Naive thymus-derived CD4-positive, alpha-beta T cell (primary cell): ENCODE measurements at regions of chr6 and their contacts with region 1.

Region 1: GRCh38 chr6:188821-189655 is 103.2 kb upstream of the DUSP22 start:
- DNase-seq: peak; percentile 36 to 80 (median 61)
- ATAC-seq: peak; percentile 91
- H3K4me3 ChIP-seq: no peak overlapping the region
- H3K4me3 Mint-ChIP-seq: peak overlapping the region in 1 of 10 donors; percentile 52
- H3K27ac ChIP-seq: no peak overlapping the region
- H3K27ac Mint-ChIP-seq: peak overlapping the region in 2 of 9 donors; percentile 47 to 51
- H3K4me1 ChIP-seq: peaks cover 12 to 25% of the 10 kb centered on the region in 2 donors
- H3K4me1 Mint-ChIP-seq: peaks cover 16 to 38% (median 34%) of the 10 kb centered on the region in 7 donors
- H3K27me3 ChIP-seq: no peaks in the 10 kb centered on the region
- H3K27me3 Mint-ChIP-seq: no peaks in the 10 kb centered on the region

Region 2: GRCh38 chr6:206264-206663 is 17.2 kb after region 1 on chr6:
- CTCF ChIA-PET with region 1: no interaction called
- POLR2A ChIA-PET with region 1: no interaction called
- intact Hi-C with region 1: no loop called
- DNase-seq: no peak
- ATAC-seq: no peak
- H3K4me3 ChIP-seq: no peak overlapping the region
- H3K4me3 Mint-ChIP-seq: no peak overlapping the region
- H3K27ac ChIP-seq: no peak overlapping the region
- H3K27ac Mint-ChIP-seq: peak overlapping the region in 2 of 9 donors; percentile 12
- H3K4me1 ChIP-seq: peaks cover 0 to 9% of the 10 kb centered on the region in 2 donors
- H3K4me1 Mint-ChIP-seq: peaks cover 0 to 32% (median 4%) of the 10 kb centered on the region in 7 donors
- H3K27me3 ChIP-seq: no peaks in the 10 kb centered on the region
- H3K27me3 Mint-ChIP-seq: peaks cover 0 to 21% (median 0%) of the 10 kb centered on the region in 5 donors

Region 3: GRCh38 chr6:291697-292505 is 102.9 kb after region 1 on chr6 and contains the start of gene DUSP22:
- CTCF ChIA-PET with region 1: no interaction called
- POLR2A ChIA-PET with region 1: interaction called, 4 read pairs
- intact Hi-C with region 1: loop called (anchors 1 kb)
- DNase-seq: peak; percentile 52 to 95 (median 78)
- ATAC-seq: peak; percentile 74
- H3K4me3 ChIP-seq: peak within 1 kb of the TSS; percentile 63
- H3K4me3 Mint-ChIP-seq: peak within 1 kb of the TSS; percentile 85 to 97 (median 93)
- H3K27ac ChIP-seq: peak within 1 kb of the TSS; percentile 82
- H3K27ac Mint-ChIP-seq: peak within 1 kb of the TSS; percentile 86 to 98 (median 94)
- H3K4me1 ChIP-seq: peaks cover 9 to 26% of the 10 kb centered on the region in 2 donors
- H3K4me1 Mint-ChIP-seq: peaks cover 31 to 63% (median 47%) of the 10 kb centered on the region in 7 donors
- H3K27me3 ChIP-seq: no peaks in the 10 kb centered on the region
- H3K27me3 Mint-ChIP-seq: no peaks in the 10 kb centered on the region
- total RNA-seq, gene DUSP22: 24.8 to 57.2 (median 51.0) TPM

Region 4: GRCh38 chr6:379367-380181 is 190.5 kb after region 1 on chr6:
- CTCF ChIA-PET with region 1: no interaction called
- POLR2A ChIA-PET with region 1: no interaction called
- intact Hi-C with region 1: no loop called
- DNase-seq: no peak
- ATAC-seq: peak; percentile 25
- H3K4me3 ChIP-seq: no peak overlapping the region
- H3K4me3 Mint-ChIP-seq: peak overlapping the region in 1 of 10 donors; percentile 3
- H3K27ac ChIP-seq: no peak overlapping the region
- H3K27ac Mint-ChIP-seq: no peak overlapping the region
- H3K4me1 ChIP-seq: no peaks in the 10 kb centered on the region
- H3K4me1 Mint-ChIP-seq: peaks cover 5 to 20% (median 9%) of the 10 kb centered on the region in 7 donors
- H3K27me3 ChIP-seq: no peaks in the 10 kb centered on the region
- H3K27me3 Mint-ChIP-seq: peaks cover 11 to 57% (median 29%) of the 10 kb centered on the region in 5 donors

Region 5: GRCh38 chr6:391559-392440 is 202.8 kb after region 1 on chr6 and contains the start of gene IRF4:
- CTCF ChIA-PET with region 1: interaction called, 3 read pairs
- POLR2A ChIA-PET with region 1: no interaction called
- intact Hi-C with region 1: loop called (anchors 1 kb)
- DNase-seq: peak in 6 of 9 donors; percentile 20 to 87 (median 32)
- ATAC-seq: peak; percentile 66
- H3K4me3 ChIP-seq: peak within 1 kb of the TSS; percentile 72
- H3K4me3 Mint-ChIP-seq: peak within 1 kb of the TSS; percentile 88 to 100 (median 96)
- H3K27ac ChIP-seq: peak within 1 kb of the TSS; percentile 60
- H3K27ac Mint-ChIP-seq: peak within 1 kb of the TSS in 8 of 9 donors; percentile 21 to 98 (median 69)
- H3K4me1 ChIP-seq: peaks cover 13 to 16% of the 10 kb centered on the region in 2 donors
- H3K4me1 Mint-ChIP-seq: peaks cover 20 to 56% (median 31%) of the 10 kb centered on the region in 7 donors
- H3K27me3 ChIP-seq: no peaks in the 10 kb centered on the region
- H3K27me3 Mint-ChIP-seq: peaks cover 0 to 24% (median 3%) of the 10 kb centered on the region in 5 donors
- total RNA-seq, gene IRF4: 11.8 to 175 (median 27.1) TPM

Region 6: DNA sequence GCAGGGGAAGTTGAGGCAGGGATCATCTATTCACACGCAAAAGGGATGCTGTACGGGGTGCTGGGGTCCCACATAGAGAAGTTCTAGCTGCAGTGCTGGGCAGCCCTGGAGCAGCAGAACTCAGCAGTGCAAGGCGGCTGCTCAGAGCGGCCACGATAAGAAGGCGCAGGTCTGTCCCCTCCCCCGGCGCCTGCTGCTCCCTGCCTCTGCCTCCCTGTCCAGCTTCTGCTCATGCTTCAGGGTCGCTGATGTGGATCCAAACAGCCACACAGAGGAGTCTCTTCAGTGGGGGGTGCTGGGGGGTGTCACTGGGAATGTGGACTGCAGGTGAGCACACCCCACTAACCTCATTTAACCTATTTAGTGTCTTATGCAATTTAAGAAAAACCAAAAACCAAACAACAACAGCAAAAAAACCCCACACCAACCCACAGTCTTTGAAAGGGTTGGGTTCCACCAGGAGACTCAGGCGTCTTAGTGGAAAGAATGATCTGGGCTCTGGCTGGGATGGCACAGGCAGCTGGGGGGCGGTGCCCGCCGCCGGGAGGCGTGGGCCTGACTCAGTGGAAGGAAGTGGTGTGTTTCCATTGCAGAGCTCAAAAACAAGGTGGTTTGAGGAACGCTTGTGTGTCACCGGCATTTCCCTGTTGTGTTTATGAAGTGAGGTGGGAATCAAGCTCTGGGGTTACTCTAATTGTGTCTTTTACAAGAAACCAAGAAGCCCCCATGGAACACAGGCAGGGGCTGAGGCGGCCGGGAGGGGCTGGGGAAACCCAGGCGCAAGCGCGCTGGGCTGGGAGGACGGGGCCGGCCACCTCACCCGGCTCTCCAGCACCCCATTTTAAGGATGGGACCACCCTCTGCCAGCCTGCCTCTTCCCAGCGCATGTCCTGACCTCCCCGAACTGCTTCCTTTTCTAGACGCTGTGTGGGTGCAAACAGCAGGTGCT is 257.7 kb after region 1 on chr6:
- CTCF ChIA-PET with region 1: no interaction called
- POLR2A ChIA-PET with region 1: no interaction called
- intact Hi-C with region 1: loop called (anchors 2 to 5 kb)
- DNase-seq: peak in 8 of 9 donors; percentile 51 to 95 (median 66)
- ATAC-seq: peak; percentile 73
- H3K4me3 ChIP-seq: peak overlapping the region; percentile 38
- H3K4me3 Mint-ChIP-seq: peak overlapping the region; percentile 34 to 76 (median 59)
- H3K27ac ChIP-seq: no peak overlapping the region
- H3K27ac Mint-ChIP-seq: peak overlapping the region; percentile 70 to 92 (median 80)
- H3K4me1 ChIP-seq: peaks cover 36 to 48% of the 10 kb centered on the region in 2 donors
- H3K4me1 Mint-ChIP-seq: peaks cover 40 to 57% (median 56%) of the 10 kb centered on the region in 7 donors
- H3K27me3 ChIP-seq: no peaks in the 10 kb centered on the region
- H3K27me3 Mint-ChIP-seq: peaks cover 0 to 2% (median 0%) of the 10 kb centered on the region in 5 donors

Region 7: DNA sequence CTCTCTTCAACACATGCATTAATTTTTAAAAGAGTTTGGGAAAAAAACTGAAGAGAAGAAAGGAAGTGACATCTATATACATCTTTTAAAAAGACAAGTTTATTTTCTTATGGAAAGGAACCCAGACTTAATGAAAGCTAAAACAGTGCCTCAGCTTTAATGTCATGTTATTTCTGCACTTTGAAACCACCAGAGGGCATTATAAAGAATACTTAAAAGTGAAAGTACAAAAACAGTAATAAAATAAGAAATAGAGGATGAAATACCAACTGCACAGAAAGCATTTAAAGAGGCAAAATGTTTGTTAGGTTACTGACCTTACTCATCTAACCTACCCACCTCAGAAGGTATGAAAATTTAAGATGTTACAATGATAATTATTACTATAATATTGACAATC is 369.1 kb after region 1 on chr6:
- CTCF ChIA-PET with region 1: interaction called, 3 read pairs
- POLR2A ChIA-PET with region 1: no interaction called
- intact Hi-C with region 1: loop called in 1 of 2 experiments (anchors 1 kb)
- DNase-seq: peak in 3 of 9 donors; percentile 2 to 7 (median 6)
- ATAC-seq: no peak
- H3K4me3 ChIP-seq: no peak overlapping the region
- H3K4me3 Mint-ChIP-seq: peak overlapping the region in 5 of 10 donors; percentile 25 to 42 (median 33)
- H3K27ac ChIP-seq: no peak overlapping the region
- H3K27ac Mint-ChIP-seq: peak overlapping the region in 5 of 9 donors; percentile 9 to 62 (median 19)
- H3K4me1 ChIP-seq: peaks cover 0 to 11% of the 10 kb centered on the region in 2 donors
- H3K4me1 Mint-ChIP-seq: peaks cover 13 to 31% (median 27%) of the 10 kb centered on the region in 7 donors
- H3K27me3 ChIP-seq: no peaks in the 10 kb centered on the region
- H3K27me3 Mint-ChIP-seq: no peaks in the 10 kb centered on the region

Region 8: DNA sequence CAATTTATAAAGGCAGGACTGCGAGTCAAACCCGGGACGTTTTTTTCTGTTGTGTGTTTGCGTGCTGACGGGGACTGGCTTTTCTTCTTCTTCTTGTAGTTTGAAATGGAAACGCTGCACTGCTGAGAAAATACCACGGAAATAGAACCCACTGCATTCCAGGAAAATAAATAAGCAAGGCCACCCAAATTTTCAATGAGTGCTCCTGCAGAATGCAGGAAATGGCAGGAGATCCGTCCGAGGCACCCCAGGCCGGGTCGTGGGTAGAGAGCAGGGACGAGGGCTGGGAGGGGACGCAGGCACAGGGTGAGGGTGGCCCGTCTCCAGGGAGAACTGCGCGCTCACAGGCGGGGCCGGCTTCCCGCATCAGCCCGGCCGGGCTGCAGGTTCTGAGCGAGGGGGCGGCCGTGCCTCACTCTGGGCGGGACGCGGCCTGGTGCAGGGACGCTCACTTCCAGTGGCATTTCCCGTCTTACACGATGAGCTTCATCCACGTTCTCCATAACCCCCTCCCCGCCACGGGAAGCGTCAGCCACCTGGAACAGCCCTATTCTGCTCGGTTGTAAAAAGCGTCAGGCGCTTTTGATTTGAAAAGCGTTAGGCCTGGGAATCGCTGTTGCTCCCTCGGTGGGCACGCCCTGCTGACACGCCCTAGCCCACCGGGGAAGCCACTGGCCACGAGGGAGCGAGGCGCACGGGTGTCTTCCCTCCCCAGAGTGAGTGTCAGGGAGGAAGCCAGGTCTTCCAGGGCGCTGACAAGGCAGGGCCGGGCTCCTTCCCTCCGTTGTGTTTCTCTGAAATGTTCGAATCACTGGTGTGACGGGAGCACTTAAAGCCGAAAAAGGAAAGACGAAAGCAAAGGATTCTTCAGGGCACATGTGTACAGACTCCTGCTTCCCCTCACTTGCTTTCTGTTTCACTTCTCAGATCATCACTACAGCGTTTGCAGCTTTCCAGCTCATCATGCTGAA is 521.8 kb after region 1 on chr6:
- CTCF ChIA-PET with region 1: no interaction called
- POLR2A ChIA-PET with region 1: no interaction called
- intact Hi-C with region 1: loop called in 1 of 2 experiments (anchors 2 kb)
- DNase-seq: peak; percentile 26 to 72 (median 63)
- ATAC-seq: peak; percentile 90
- H3K4me3 ChIP-seq: peak overlapping the region; percentile 69
- H3K4me3 Mint-ChIP-seq: peak overlapping the region; percentile 89 to 99 (median 98)
- H3K27ac ChIP-seq: peak overlapping the region; percentile 81
- H3K27ac Mint-ChIP-seq: peak overlapping the region; percentile 92 to 100 (median 99)
- H3K4me1 ChIP-seq: peaks cover 5 to 8% of the 10 kb centered on the region in 2 donors
- H3K4me1 Mint-ChIP-seq: peaks cover 8 to 42% (median 21%) of the 10 kb centered on the region in 7 donors
- H3K27me3 ChIP-seq: no peaks in the 10 kb centered on the region
- H3K27me3 Mint-ChIP-seq: peaks cover 0 to 13% (median 0%) of the 10 kb centered on the region in 5 donors

Region 9: DNA sequence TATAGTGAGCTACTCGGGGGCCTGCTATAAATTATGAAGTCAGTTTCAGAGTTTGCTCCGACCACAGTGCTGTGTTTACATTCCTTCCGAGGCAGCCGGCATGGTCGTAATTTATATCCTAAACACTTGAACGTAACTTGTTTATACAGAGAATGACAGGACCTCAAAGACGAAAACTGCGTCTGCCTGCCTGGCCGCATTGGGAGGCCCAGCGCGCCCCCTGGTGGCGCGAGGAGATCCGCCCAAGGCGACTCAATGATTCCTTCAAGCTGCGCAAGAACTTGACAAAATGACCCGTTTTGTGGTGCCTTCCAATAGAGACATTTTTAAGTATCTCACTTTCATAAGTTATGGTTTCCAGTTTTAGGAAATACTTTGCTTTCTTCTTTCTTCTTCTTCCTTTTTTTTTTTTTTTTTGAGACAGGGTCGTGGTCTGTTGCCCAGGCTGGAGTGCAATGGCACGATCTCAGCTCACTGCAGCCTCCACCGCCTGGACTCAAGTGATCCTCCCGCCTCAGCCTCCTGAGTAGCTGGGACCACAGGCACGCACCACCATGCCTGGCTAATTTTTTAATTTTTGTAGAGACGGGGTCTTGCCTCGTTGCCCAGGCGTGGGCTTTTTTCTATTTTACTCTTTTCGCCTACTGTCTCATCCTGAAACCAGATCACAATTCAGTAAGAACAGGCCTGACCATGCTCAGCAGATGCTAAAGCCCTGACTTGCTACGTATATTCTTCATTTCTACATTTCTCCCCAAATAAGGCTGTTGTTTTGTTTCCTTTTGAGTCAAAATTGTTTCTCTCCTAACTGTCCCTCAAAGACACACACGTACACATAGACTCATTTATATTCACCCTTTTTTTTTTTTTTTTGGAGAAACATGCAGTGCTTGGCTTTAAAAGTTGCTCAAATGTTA is 1208.2 kb after region 1 on chr6:
- CTCF ChIA-PET with region 1: interaction called, 5 read pairs
- POLR2A ChIA-PET with region 1: no interaction called
- intact Hi-C with region 1: loop called (anchors 1 to 5 kb)
- DNase-seq: peak; percentile 39 to 75 (median 67)
- ATAC-seq: peak; percentile 78
- H3K4me3 ChIP-seq: no peak overlapping the region
- H3K4me3 Mint-ChIP-seq: peak overlapping the region in 5 of 10 donors; percentile 4 to 57 (median 41)
- H3K27ac ChIP-seq: no peak overlapping the region
- H3K27ac Mint-ChIP-seq: peak overlapping the region in 1 of 9 donors; percentile 24
- H3K4me1 ChIP-seq: no peaks in the 10 kb centered on the region
- H3K4me1 Mint-ChIP-seq: peaks cover 0 to 16% (median 6%) of the 10 kb centered on the region in 7 donors
- H3K27me3 ChIP-seq: peaks cover 0 to 17% of the 10 kb centered on the region in 2 donors
- H3K27me3 Mint-ChIP-seq: peaks cover 54 to 67% (median 59%) of the 10 kb centered on the region in 5 donors